Activated naive CD8-positive, alpha-beta T cell treated with anti-CD3 and anti-CD28 coated beads, Interleukin-2, amount 10 ng/mL, durations not matched to agents 7 days and 5 days (primary cell): ENCODE measurements at regions of chr15 and their contacts with region 1.

Region 1: DNA sequence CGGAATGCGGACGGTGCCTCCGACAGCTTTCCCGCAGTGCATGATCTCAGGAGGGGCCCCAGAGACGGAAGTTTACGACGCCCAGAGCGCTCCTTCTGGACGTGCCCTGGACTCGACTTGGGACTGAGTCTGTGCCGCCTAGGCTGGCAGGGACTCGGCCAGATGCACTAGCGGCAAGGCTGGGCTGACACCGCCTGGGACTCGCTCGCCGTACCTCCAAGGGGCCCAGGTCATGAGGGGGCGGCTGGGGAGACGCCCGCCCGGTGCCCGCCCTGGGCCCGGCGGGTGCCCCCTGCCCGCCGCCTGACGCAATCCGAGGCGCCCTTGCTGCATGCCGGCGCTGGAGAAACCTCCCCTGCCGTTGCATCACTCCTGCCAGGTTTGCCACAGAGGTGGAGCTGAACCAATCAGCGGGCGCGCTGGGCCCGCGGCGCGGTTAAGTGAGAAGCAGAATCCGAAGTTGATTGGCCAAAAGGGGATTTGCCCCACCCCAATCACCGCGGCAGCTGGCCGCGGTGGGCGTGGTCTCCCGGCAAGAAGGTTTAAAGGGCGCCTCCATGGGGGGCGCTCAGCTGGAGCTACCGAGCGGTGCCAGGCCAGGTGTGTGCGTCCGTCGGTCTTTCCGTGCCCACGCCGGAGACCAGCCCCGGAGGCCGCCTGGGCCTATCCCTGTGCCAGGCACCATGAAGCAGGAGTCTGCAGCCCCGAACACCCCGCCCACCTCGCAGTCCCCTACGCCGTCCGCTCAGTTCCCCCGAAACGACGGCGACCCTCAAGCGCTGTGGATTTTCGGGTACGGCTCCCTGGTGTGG is at the start of gene CHAC1:
- DNase-seq: peak; percentile 97
- ATAC-seq: peak; percentile 91
- H3K4me3 Mint-ChIP-seq: peak within 1 kb of the TSS; percentile 87
- H3K27ac Mint-ChIP-seq: peak within 1 kb of the TSS; percentile 91
- H3K4me1 Mint-ChIP-seq: peaks cover 32% of the 10 kb centered on the region
- H3K27me3 Mint-ChIP-seq: no peaks in the 10 kb centered on the region
- total RNA-seq, gene CHAC1: 13.9 to 14.1 TPM

Region 2: GRCh38 chr15:40893733-40894688 is 59.1 kb before region 1 on chr15 and contains the start of gene VPS18:
- POLR2A ChIA-PET with region 1: interaction called, 12 read pairs
- DNase-seq: peak; percentile 99
- ATAC-seq: peak; percentile 99
- H3K4me3 Mint-ChIP-seq: peak within 1 kb of the TSS; percentile 98
- H3K27ac Mint-ChIP-seq: peak within 1 kb of the TSS; percentile 99
- H3K4me1 Mint-ChIP-seq: peaks cover 25% of the 10 kb centered on the region
- H3K27me3 Mint-ChIP-seq: peaks cover 6% of the 10 kb centered on the region
- total RNA-seq, gene VPS18: 20.1 to 21.2 TPM

Region 3: DNA sequence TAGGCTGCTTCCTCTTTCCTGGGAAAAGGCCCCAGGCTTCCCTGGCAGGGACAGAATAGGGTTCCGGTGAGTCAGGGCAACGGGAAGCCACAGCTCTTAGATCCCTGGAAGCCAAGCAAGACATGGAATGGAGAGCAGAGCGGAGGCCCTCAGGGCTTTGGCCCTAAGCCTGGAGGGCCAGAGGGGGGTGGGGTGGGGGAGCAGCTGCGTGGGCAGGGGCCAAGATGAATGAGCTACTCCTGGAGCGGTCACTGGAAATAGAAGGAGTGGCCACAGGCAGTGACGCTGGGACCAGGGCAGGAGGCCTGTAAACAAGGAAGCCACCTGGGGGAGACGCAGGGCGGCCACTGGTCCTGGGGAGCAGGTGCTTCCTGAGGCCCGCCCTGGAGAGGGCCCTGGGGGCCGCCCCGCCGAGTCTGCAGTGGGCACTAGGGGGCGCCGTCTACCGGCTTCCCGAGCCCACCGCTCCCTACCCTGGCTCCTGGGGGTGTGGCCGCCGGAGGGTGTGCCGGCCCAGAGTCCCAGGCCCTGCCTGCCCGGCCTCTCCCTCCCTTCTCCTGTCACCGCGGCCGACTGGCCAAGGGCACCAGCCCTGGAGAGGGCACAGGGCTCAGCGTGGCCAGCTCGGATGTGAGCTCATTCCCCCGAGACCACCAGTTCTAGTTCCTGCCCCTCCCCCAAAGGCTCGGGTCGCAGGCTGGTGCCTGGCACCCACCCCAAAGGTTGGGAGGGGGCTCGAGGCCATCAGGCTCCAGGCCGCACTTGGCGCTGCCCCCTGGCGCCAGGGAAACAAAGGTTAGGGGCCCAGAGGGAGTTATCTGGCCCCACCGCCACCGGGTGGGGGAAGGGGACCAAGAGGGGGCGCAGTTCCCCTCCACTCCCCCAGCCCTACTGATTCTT is 46.8 kb before region 1 on chr15:
- POLR2A ChIA-PET with region 1: interaction called, 12 read pairs
- DNase-seq: peak; percentile 88
- ATAC-seq: peak; percentile 80
- H3K4me3 Mint-ChIP-seq: peak overlapping the region; percentile 76
- H3K27ac Mint-ChIP-seq: peak overlapping the region; percentile 54
- H3K4me1 Mint-ChIP-seq: peaks cover 22% of the 10 kb centered on the region
- H3K27me3 Mint-ChIP-seq: no peaks in the 10 kb centered on the region

Region 4: DNA sequence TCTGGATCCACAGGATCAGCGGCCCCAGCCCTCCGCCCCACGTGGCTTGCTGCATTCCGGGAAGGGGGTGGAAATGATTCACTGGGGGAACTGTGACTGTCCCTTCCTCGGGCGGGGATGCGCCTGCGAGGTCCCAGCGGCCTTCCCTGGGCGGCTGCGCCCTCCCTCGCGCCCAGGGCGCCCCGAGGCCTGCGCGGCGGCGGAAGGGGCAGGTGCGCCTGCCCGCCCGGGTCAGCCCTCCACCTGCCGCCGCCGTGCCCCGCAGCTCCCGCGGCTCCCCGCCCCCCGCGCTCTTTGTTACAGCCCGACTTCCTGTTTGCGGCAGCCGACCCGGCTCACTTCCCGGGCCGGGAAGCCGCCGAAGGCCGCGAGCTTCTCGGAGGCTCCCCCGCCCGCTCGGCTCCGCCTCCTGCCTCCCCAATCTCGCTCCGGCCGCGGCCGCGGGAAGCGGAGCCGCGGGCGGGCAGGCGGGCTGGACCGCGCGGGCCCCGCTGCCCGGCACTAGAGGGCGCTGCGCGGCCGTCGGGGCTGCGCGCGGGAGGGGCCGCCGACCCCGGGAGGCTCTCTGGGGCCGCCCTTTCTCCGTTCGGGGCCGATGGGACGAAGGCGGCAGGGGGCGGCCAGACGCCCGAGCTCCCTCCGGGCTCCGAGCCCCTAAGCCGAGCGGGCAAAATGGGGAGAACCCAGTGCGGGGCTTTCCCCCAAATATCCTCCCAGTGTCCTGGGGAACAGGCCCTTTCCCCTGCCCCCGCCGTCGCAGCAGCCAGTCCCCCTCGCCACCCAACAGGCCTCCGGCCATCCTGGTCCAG is 11.4 kb before region 1 on chr15:
- POLR2A ChIA-PET with region 1: interaction called, 68 read pairs
- DNase-seq: peak; percentile 85
- ATAC-seq: peak; percentile 73
- H3K4me3 Mint-ChIP-seq: peak overlapping the region; percentile 74
- H3K27ac Mint-ChIP-seq: peak overlapping the region; percentile 37
- H3K4me1 Mint-ChIP-seq: peaks cover 26% of the 10 kb centered on the region
- H3K27me3 Mint-ChIP-seq: no peaks in the 10 kb centered on the region

Region 5: DNA sequence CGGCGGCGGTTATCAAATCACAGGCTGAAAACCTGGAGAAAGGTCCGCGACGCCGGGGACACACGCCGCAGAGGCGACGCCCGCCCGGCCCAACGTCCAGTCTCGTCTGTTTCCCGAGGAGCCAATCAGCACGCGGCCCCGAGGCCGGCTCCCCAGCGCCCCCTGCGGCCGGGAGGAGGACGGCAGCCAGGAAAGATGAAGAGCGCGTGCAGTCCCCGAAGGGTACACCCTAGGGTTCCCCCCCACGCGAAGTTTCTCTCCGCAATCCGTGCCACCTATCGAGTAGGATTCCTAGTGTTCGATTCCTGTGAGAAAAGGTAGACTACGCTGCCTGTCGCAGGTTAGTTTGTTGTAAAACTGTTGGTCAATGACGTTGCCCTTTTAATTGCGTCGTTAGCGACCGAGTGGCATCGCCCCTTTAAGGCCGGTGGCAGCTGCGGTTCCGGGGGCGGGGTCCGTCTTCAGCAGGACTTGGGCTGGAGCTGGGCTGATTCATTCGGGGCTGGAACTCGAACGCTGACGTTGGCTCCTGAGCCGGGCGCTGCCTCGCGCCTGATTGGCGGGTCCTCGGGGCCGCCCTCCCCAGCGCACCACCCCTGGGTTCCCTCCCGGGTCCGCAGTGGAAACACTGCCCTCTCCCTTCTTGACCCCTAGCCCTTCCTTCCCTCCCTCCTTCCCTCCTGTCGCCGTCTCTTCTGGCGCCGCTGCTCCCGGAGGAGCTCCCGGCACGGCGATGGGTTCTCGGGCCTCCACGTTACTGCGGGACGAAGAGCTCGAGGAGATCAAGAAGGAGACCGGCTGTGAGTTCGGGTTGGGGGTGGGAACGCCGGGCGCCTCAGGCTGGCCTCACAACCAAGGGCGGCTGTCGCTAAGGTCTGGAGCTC is 277.8 kb after region 1 on chr15 and contains the starts of genes CHP1 and EXD1:
- POLR2A ChIA-PET with region 1: interaction called, 10 read pairs
- DNase-seq: peak; percentile 95
- ATAC-seq: peak; percentile 99
- H3K4me3 Mint-ChIP-seq: peak within 1 kb of the TSS; percentile 91
- H3K27ac Mint-ChIP-seq: peak within 1 kb of the TSS; percentile 93
- H3K4me1 Mint-ChIP-seq: peaks cover 22% of the 10 kb centered on the region
- H3K27me3 Mint-ChIP-seq: peaks cover 9% of the 10 kb centered on the region
- total RNA-seq, gene CHP1: 40.6 to 41.3 TPM
- total RNA-seq, gene EXD1: not detected